Activated CD4-positive, alpha-beta T cell treated with anti-CD3 and anti-CD28 coated beads for 36 hours (primary cell): ENCODE measurements at regions of chr19 and their contacts with region 1.

Region 1: GRCh38 chr19:13861732-13862531 is 15.0 kb upstream of the NANOS3 start:
- DNase-seq: peak; percentile 94
- ATAC-seq: peak; percentile 92
- H3K4me3 Mint-ChIP-seq: peak overlapping the region; percentile 85
- H3K27ac Mint-ChIP-seq: peak overlapping the region; percentile 96
- H3K4me1 Mint-ChIP-seq: peaks cover 37% of the 10 kb centered on the region
- H3K27me3 Mint-ChIP-seq: peaks cover 25% of the 10 kb centered on the region

Region 2: GRCh38 chr19:13597640-13598039 is 264.3 kb before region 1 on chr19:
- CTCF ChIA-PET with region 1: interaction called, 3 read pairs
- POLR2A ChIA-PET with region 1: no interaction called
- intact Hi-C with region 1: loop called (anchors 1 kb)
- DNase-seq: peak; percentile 74
- ATAC-seq: peak; percentile 95
- H3K4me3 Mint-ChIP-seq: no peak overlapping the region
- H3K27ac Mint-ChIP-seq: no peak overlapping the region
- H3K4me1 Mint-ChIP-seq: no peaks in the 10 kb centered on the region
- H3K27me3 Mint-ChIP-seq: peaks cover 10% of the 10 kb centered on the region

Region 3: GRCh38 chr19:13748169-13748828 is 113.6 kb before region 1 on chr19:
- CTCF ChIA-PET with region 1: interaction called, 10 read pairs
- POLR2A ChIA-PET with region 1: interaction called, 3 read pairs
- intact Hi-C with region 1: loop called in 1 of 2 experiments (anchors 1 kb)
- DNase-seq: peak; percentile 50
- ATAC-seq: peak; percentile 2
- H3K4me3 Mint-ChIP-seq: peak overlapping the region; percentile 80
- H3K27ac Mint-ChIP-seq: peak overlapping the region; percentile 84
- H3K4me1 Mint-ChIP-seq: peaks cover 30% of the 10 kb centered on the region
- H3K27me3 Mint-ChIP-seq: no peaks in the 10 kb centered on the region

Region 4: GRCh38 chr19:13794757-13795589 is 67.0 kb before region 1 on chr19 and contains the start of gene ZSWIM4:
- CTCF ChIA-PET with region 1: interaction called, 105 read pairs
- POLR2A ChIA-PET with region 1: interaction called, 3 read pairs
- intact Hi-C with region 1: no loop called
- DNase-seq: peak; percentile 98
- ATAC-seq: peak; percentile 99
- H3K4me3 Mint-ChIP-seq: peak within 1 kb of the TSS; percentile 96
- H3K27ac Mint-ChIP-seq: peak within 1 kb of the TSS; percentile 94
- H3K4me1 Mint-ChIP-seq: peaks cover 24% of the 10 kb centered on the region
- H3K27me3 Mint-ChIP-seq: no peaks in the 10 kb centered on the region
- total RNA-seq, gene ZSWIM4: 5.6 to 5.8 TPM

Region 5: DNA sequence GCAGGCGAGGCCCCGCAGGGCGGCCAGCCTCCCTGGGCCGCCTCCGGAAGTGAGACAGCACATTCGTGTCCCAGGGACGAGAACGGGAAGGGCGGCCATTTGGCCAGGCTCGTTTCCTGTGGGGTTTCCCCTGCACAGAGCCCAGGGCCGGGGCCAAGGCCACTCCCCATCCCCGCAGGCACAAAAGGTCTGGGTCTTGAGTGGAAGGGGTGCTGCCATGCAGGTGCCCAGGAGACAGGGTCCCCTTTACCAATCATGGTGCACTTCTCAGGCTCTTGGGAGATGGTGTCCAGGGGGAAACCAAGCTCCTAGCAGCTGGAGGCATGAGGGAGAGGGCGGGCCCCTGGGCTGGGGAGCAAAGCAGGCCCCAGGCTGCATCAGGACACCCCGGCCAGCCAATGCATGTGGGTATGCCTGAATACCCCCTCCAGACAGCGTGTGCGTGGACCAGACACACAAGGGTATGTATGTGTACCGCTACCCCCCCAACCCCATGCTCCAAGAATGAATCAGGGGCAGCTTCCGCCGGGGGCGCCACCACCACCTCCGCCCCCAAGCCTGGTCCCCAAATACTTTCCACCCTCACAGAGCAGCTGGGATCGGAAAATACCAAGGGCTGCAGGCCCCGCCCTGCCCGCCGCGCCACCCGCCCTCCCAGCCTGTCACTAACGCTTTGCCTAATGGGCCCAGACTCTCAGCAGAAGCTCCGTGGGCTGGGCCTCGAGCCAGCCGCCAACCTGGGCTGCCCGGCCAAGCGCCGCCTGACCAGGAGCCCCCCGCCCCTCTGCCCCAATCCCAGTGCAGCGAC is 22.6 kb before region 1 on chr19:
- CTCF ChIA-PET with region 1: interaction called, 19 read pairs
- POLR2A ChIA-PET with region 1: interaction called, 15 read pairs
- intact Hi-C with region 1: loop called in 1 of 2 experiments (anchors 1 kb)
- DNase-seq: peak; percentile 96
- ATAC-seq: peak; percentile 68
- H3K4me3 Mint-ChIP-seq: peak overlapping the region; percentile 94
- H3K27ac Mint-ChIP-seq: peak overlapping the region; percentile 95
- H3K4me1 Mint-ChIP-seq: peaks cover 54% of the 10 kb centered on the region
- H3K27me3 Mint-ChIP-seq: no peaks in the 10 kb centered on the region

Region 6: DNA sequence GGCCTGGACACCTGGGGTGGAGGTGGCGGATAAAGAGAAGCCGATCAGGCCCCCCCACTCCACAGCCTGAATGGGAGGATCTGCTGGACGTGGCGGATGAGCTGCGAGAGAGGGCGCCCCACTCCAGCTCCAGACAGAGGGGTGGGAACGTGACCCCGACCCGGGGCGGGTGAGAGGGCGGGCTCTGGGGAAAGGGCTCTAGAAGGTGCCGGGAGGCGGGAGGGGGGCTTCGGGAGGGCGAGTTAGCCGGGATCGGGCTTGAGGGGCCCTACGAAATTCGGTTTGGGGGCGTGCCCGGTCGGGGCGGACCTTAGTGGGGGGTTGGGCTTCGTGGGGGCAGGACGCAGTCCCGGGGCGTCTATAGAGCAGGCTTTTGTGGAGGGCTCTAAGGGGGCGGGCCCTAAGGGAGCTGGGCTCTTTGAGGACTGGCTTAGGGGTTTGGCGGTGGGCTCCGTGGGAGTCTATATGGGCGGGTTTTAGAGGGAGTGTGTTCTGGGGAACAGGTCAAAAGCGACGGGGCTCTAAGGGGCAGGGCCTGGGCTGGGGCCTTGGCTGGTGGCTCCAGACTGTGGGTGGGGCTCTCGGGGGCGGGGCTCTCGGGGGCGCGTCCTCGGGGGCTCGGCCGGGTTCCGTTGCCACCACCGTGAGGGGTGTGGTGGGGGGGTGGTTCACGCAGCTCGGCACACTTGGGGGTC is 10.9 kb after region 1 on chr19:
- CTCF ChIA-PET with region 1: interaction called, 13 read pairs
- POLR2A ChIA-PET with region 1: no interaction called
- intact Hi-C with region 1: no loop called
- DNase-seq: peak; percentile 51
- ATAC-seq: peak; percentile 63
- H3K4me3 Mint-ChIP-seq: peak overlapping the region; percentile 46
- H3K27ac Mint-ChIP-seq: no peak overlapping the region
- H3K4me1 Mint-ChIP-seq: peaks cover 3% of the 10 kb centered on the region
- H3K27me3 Mint-ChIP-seq: peaks cover 10% of the 10 kb centered on the region